Endothelial cell of umbilical vein (primary cell): ENCODE measurements at regions of chr2 and their contacts with region 1.

Region 1: DNA sequence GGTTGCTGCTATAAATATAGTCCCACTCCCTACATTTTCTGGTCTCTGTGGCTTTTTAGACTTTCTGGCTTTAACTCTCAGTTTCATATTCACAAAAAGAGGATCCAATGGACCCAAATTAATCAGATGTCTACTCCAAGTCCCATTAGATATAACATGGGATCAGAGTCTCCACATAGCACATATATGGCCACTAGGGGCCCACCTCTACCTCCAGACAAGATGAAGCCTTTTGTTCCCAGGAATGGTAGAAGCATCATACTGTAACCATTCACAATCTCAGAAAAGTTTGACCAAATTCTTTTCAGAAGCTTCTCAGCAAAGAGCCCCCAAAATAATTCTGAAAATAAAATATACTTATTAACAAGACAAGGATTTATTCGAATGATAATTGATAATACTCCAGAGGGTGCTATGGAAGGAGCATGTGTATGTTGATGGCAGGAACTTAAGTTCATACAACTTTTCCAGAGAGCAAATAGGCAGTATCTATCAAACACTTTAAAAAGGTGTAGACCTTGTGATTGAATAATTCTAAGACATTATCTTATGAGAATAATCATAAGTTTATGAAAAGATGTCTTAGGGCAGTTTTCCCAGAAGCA is 382.3 kb upstream of the CRIM1 start:
- DNase-seq: peak; percentile 78
- H3K4me3 ChIP-seq: no peak overlapping the region
- H3K27ac ChIP-seq: peak overlapping the region; percentile 64
- H3K4me1 ChIP-seq: peaks cover 8% of the 10 kb centered on the region
- H3K27me3 ChIP-seq: no peaks in the 10 kb centered on the region
- CTCF ChIP-seq: peak; percentile 45 to 67
- POLR2A ChIP-seq: no peak

Region 2: DNA sequence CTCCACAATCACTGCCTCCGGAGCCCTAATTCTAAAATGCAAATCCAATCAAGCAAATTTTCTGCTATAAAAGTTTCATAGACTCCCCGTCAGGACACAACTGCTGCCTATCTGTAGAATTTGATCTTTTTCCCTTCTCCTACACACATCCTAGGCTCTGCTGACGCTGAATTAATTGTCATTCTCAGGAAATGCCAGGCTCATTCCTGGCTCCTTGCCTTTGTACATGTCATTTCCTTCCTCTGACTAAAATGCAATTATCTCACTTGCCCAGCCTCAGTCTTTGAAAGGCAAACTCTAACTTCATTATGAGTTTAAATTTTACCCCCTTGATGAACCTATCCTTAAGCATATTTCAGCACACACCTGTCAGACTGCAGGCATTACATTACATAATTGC is 462.6 kb before region 1 on chr2:
- CTCF ChIA-PET with region 1: no interaction called
- POLR2A ChIA-PET with region 1: no interaction called
- dilution Hi-C with region 1: no loop called
- intact Hi-C with region 1: loop called (anchors 2 kb)
- DNase-seq: peak; percentile 92
- H3K4me3 ChIP-seq: no peak overlapping the region
- H3K27ac ChIP-seq: peak overlapping the region; percentile 74
- H3K4me1 ChIP-seq: peaks cover 30% of the 10 kb centered on the region
- H3K27me3 ChIP-seq: no peaks in the 10 kb centered on the region
- CTCF ChIP-seq: no peak
- POLR2A ChIP-seq: no peak

Region 3: DNA sequence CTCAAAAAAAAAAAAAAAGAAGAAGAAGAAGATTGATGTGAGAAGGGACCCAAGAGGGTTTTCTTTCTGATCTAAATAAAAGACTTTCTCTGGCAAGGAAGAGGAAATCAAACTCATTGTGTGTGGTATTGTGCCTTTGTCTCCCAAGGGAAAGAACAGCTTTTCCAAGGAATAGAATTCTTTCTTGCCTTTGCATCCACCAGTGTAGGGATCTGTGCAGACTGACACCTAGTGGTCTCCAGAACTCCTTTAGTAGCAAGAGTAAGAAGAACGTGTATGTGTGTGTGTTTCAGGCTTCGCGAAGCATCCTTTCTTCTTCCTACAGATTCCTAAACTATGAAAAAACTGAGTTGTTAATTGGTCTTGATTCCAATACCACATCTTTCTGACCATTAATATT is 348.9 kb after region 1 on chr2:
- CTCF ChIA-PET with region 1: interaction called, 7 read pairs
- POLR2A ChIA-PET with region 1: no interaction called
- dilution Hi-C with region 1: no loop called
- intact Hi-C with region 1: loop called (anchors 1 kb)
- DNase-seq: peak; percentile 70
- H3K4me3 ChIP-seq: no peak overlapping the region
- H3K27ac ChIP-seq: no peak overlapping the region
- H3K4me1 ChIP-seq: no peaks in the 10 kb centered on the region
- H3K27me3 ChIP-seq: peaks cover 3% of the 10 kb centered on the region in 2 experiments
- CTCF ChIP-seq: peak; percentile 28 to 60
- POLR2A ChIP-seq: no peak

Region 4: GRCh38 chr2:36672199-36672598 is 699.0 kb after region 1 on chr2:
- CTCF ChIA-PET with region 1: interaction called, 4 read pairs
- POLR2A ChIA-PET with region 1: no interaction called
- dilution Hi-C with region 1: no loop called
- intact Hi-C with region 1: loop called (anchors 5 kb)
- DNase-seq: peak; percentile 60
- H3K4me3 ChIP-seq: no peak overlapping the region
- H3K27ac ChIP-seq: no peak overlapping the region
- H3K4me1 ChIP-seq: peaks cover 14% of the 10 kb centered on the region
- H3K27me3 ChIP-seq: no peaks in the 10 kb centered on the region
- CTCF ChIP-seq: peak; percentile 58
- POLR2A ChIP-seq: no peak

Region 5: DNA sequence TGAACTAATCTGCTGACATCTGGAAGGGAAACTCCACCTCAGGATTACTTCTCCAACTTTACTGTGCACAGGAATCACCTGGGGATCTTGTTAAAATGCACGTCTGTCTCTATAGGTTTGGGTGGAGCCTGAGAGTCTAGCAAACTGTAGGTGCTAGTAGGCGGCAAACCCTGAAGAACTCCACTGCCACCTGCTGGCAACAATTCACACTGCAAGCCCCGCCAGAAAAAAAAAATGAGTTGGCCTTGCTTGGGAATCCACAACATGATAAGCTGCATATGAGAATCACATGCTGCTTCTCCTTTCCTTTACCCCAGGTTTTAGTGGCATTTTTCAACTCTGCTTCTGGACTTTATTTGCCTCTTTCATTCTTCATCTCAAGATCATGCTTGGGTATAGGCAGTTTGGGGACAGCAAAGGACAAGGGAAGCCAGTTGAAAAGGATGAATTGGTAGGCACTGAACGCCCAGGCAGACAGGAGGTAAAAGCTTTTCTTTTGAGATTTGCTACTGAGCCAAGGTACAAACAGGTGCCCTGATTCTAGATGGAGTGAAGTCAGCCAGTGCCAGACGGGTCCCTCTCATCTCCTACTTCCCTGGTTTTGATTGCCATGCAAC is 812.1 kb after region 1 on chr2:
- CTCF ChIA-PET with region 1: no interaction called
- POLR2A ChIA-PET with region 1: no interaction called
- dilution Hi-C with region 1: no loop called
- intact Hi-C with region 1: loop called (anchors 5 kb)
- DNase-seq: peak; percentile 77
- H3K4me3 ChIP-seq: no peak overlapping the region
- H3K27ac ChIP-seq: no peak overlapping the region
- H3K4me1 ChIP-seq: no peaks in the 10 kb centered on the region
- H3K27me3 ChIP-seq: peaks cover 13 to 22% of the 10 kb centered on the region in 2 experiments
- CTCF ChIP-seq: peak; percentile 84 to 89
- POLR2A ChIP-seq: no peak